Heart right ventricle (tissue), 16 donors: ENCODE measurements at regions of chr18 and their contacts with region 1.

Region 1: GRCh38 chr18:1595195-1595594 is 690.5 kb downstream of the ADCYAP1 start:
- DNase-seq: no peak
- ATAC-seq: no peak
- H3K4me3 ChIP-seq: no peak overlapping the region
- H3K27ac ChIP-seq: no peak overlapping the region
- H3K4me1 ChIP-seq: no peaks in the 10 kb centered on the region
- H3K27me3 ChIP-seq: no peaks in the 10 kb centered on the region
- CTCF ChIP-seq: no peak

Region 2: DNA sequence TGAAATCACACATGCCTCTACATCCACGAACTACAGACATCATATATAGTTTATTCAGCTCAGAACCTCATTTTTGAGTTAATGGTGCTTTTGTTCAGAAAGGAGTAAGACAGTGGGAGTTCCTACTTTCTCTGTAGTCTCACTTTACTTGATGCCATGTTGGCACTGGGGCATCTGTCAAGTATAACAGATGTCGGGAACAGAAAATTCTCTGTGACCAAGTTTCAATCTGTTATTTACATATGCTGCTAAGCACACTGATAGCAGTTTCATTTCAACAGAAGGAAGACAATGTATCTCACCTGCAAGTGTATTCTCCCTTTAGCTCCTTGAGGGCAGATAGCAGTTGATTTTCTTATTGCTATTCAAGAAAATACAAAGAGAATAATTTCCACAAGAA is 202.0 kb after region 1 on chr18:
- intact Hi-C with region 1: loop called in 1 of 10 experiments (anchors 10 kb)
- DNase-seq: no peak
- ATAC-seq: no peak
- H3K4me3 ChIP-seq: no peak overlapping the region
- H3K27ac ChIP-seq: no peak overlapping the region
- H3K4me1 ChIP-seq: peaks cover 0 to 5% (median 0%) of the 10 kb centered on the region in 9 donors
- H3K27me3 ChIP-seq: no peaks in the 10 kb centered on the region
- CTCF ChIP-seq: no peak